ENCODE measurements at regions of chr10 and their contacts with region 1.

Region 1: GRCh38 chr10:16545116-16545736 is 23.5 kb upstream of the C1QL3 start:
- DNase-seq: peak; percentile 8
- H3K4me3 Mint-ChIP-seq: no peak overlapping the region
- H3K27ac Mint-ChIP-seq: no peak overlapping the region
- H3K4me1 Mint-ChIP-seq: no peaks in the 10 kb centered on the region
- H3K27me3 Mint-ChIP-seq: no peaks in the 10 kb centered on the region
- CTCF ChIP-seq: peak; percentile 38

Region 2: DNA sequence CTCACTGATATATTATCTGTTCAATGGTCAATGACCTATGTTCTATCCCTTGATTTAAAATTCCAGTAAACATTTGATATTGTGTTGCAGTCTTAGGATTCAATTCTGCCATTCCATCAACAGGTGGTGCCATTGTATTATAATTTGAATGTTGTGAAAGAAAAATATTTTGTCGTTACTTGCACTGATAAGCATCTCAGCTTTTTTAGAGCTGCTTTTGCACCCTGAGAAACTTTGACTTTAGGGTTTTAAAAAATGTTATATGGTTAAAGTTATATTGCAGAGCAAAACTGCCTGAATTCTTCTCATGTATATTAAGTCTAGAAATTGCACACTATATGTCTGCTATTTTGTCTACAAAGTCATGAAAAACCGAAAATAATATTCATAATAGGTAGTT is 666.2 kb before region 1 on chr10:
- CTCF ChIA-PET with region 1: no interaction called
- intact Hi-C with region 1: loop called (anchors 5 kb)
- DNase-seq: no peak
- H3K4me3 Mint-ChIP-seq: no peak overlapping the region
- H3K27ac Mint-ChIP-seq: no peak overlapping the region
- H3K4me1 Mint-ChIP-seq: no peaks in the 10 kb centered on the region
- H3K27me3 Mint-ChIP-seq: peaks cover 61% of the 10 kb centered on the region
- CTCF ChIP-seq: peak; percentile 35

Region 3: DNA sequence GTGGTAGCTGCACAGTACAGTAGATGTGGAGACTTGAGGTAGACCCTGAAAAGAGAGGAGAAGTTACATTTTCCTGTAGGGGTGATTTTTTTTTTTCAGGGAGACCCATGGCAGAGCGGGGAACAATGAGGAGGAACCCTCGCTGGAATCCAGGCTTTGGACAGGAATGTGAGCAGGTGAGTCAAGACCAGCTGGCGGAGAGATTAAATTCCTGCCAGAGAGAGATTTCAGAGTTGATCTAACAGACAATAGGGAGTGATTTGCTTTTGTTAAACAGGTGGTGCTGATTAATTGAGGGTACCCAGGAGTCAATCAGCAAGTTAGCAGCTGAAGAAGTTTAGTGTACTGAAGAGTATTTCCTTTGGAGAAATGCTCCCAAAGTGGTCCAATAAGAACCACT is 643.3 kb before region 1 on chr10:
- CTCF ChIA-PET with region 1: interaction called, 4 read pairs
- intact Hi-C with region 1: loop called (anchors 10 kb)
- DNase-seq: no peak
- H3K4me3 Mint-ChIP-seq: no peak overlapping the region
- H3K27ac Mint-ChIP-seq: no peak overlapping the region
- H3K4me1 Mint-ChIP-seq: no peaks in the 10 kb centered on the region
- H3K27me3 Mint-ChIP-seq: peaks cover 23% of the 10 kb centered on the region
- CTCF ChIP-seq: no peak

Region 4: GRCh38 chr10:16116404-16117304 is 428.6 kb before region 1 on chr10:
- CTCF ChIA-PET with region 1: interaction called, 3 read pairs
- intact Hi-C with region 1: loop called (anchors 10 kb)
- DNase-seq: peak; percentile 6
- H3K4me3 Mint-ChIP-seq: no peak overlapping the region
- H3K27ac Mint-ChIP-seq: no peak overlapping the region
- H3K4me1 Mint-ChIP-seq: no peaks in the 10 kb centered on the region
- H3K27me3 Mint-ChIP-seq: no peaks in the 10 kb centered on the region
- CTCF ChIP-seq: peak; percentile 41

Region 5: DNA sequence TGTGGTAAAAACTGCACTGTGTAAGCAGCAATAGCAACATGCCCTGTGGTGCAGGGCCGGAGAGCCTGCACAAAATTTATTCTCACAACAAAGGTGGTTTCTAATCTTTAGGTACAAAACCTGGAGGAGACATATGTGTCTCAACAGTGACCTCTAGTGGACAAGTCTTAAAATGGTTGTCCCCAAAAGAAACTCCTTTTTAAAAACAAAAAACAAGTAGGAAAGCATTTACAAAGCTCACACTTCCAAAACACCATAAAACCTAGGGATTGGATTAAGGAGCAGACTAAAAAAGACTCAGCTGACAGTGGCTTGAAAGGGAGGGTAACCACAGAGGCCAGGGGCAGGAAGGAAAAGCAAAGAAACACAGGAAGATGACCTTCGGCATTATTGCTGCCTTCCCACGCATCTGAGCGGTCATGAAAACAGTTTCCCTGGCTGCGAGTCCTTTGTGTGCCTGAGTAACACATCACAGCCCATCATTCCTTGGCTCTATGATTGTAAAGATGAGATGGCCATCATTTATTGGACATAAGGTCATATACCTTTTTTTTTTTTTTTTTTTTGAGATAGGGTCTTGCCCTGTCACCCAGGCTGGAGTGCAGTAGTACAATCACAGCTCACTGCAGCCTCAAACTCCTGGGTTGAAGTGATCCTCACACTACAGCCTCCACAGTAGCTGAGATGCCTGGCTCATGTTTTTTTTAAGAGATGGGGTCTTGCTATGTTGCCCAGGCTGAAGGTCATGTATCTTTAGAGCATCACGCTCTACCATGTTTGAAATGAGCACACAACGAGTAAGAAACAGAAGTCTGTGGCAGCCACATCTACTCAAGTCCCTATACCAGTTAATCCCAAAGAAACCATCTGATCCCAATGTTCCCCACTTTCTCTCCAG is 232.5 kb after region 1 on chr10:
- CTCF ChIA-PET with region 1: no interaction called
- intact Hi-C with region 1: loop called (anchors 10 kb)
- DNase-seq: peak; percentile 8
- H3K4me3 Mint-ChIP-seq: no peak overlapping the region
- H3K27ac Mint-ChIP-seq: no peak overlapping the region
- H3K4me1 Mint-ChIP-seq: peaks cover 8% of the 10 kb centered on the region
- H3K27me3 Mint-ChIP-seq: no peaks in the 10 kb centered on the region
- CTCF ChIP-seq: peak; percentile 64

Measured in Calu3 (cell line).